ENCODE measurements at regions of chrX and their contacts with region 1.

Region 1: GRCh38 chrX:23782863-23783568 is at the start of gene SAT1:
- DNase-seq: peak; percentile 86
- CTCF ChIP-seq: peak; percentile 50

Region 2: DNA sequence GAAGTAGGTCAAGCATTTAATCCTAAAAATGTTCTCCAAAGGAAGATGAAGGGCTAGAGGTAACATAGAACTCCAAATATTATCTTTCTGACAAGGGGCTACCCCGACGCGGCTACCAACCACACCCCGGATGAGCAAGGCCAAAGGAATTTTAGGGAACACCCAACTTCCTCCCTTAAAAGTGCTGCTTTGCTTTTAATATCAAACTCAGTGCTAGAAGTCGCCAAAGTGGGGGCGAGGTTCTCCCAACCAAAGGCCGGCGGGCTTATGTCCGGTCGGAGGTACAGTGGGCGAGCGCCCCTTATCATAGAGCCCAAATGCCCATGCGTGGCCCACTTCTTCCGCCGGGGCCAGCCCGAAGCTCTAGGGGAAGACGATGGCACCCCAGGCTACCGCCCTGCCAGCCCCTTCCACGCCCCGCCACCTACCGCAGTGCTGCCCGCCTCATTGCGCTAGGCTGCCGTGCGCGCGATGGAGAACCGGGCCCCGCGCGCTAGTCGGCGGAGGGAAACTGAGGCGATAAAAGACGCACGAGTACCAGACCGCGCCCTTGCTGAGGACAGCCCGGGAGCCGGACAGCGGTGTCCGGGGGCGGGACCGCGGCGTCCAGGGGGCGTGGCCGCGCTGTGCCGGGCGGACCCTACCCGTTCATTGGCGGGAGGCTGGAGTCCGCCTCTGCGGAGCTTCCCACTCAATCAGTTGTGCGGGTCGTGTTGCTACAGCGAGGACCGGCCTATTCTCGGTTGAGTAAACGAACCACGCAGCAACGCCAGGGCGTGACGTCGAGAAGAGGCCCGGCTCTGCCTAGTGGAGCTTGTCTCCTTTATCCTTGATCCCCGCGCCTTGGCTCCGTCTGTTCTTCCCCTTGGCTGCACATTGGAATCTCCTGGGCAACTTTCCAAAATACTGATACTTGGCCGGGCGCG is 40.1 kb before region 1 on chrX and contains the start of gene ACOT9:
- CTCF ChIA-PET with region 1: interaction called, 4 read pairs
- POLR2A ChIA-PET with region 1: interaction called, 15 read pairs
- DNase-seq: peak; percentile 88
- CTCF ChIP-seq: no peak

Region 3: GRCh38 chrX:23822397-23822796 is 39.4 kb after region 1 on chrX:
- CTCF ChIA-PET with region 1: no interaction called
- POLR2A ChIA-PET with region 1: interaction called, 13 read pairs
- DNase-seq: no peak
- CTCF ChIP-seq: no peak

Region 4: GRCh38 chrX:24054182-24055042 is 271.4 kb after region 1 on chrX and contains the start of gene EIF2S3:
- CTCF ChIA-PET with region 1: interaction called, 7 read pairs
- POLR2A ChIA-PET with region 1: interaction called, 17 read pairs
- DNase-seq: peak; percentile 89
- CTCF ChIP-seq: peak; percentile 10

Measured in GM10248 (cell line).